ENCODE measurements at regions of chr14 and their contacts with region 1.

Region 1: GRCh38 chr14:99604283-99604765 is 317 bp upstream of the CCDC85C start:
- DNase-seq: peak; percentile 96 to 97
- ATAC-seq: peak; percentile 93 to 98 (median 94)
- H3K4me3 ChIP-seq: peak overlapping the region; percentile 92
- H3K4me3 Mint-ChIP-seq: peak overlapping the region; percentile 95
- H3K27ac ChIP-seq: peak overlapping the region; percentile 77
- H3K27ac Mint-ChIP-seq: peak overlapping the region; percentile 79 to 85
- H3K4me1 ChIP-seq: peaks cover 26% of the 10 kb centered on the region
- H3K4me1 Mint-ChIP-seq: peaks cover 13 to 23% of the 10 kb centered on the region in 2 donors
- H3K27me3 ChIP-seq: no peaks in the 10 kb centered on the region
- H3K27me3 Mint-ChIP-seq: no peaks in the 10 kb centered on the region
- CTCF ChIP-seq: no peak

Region 2: DNA sequence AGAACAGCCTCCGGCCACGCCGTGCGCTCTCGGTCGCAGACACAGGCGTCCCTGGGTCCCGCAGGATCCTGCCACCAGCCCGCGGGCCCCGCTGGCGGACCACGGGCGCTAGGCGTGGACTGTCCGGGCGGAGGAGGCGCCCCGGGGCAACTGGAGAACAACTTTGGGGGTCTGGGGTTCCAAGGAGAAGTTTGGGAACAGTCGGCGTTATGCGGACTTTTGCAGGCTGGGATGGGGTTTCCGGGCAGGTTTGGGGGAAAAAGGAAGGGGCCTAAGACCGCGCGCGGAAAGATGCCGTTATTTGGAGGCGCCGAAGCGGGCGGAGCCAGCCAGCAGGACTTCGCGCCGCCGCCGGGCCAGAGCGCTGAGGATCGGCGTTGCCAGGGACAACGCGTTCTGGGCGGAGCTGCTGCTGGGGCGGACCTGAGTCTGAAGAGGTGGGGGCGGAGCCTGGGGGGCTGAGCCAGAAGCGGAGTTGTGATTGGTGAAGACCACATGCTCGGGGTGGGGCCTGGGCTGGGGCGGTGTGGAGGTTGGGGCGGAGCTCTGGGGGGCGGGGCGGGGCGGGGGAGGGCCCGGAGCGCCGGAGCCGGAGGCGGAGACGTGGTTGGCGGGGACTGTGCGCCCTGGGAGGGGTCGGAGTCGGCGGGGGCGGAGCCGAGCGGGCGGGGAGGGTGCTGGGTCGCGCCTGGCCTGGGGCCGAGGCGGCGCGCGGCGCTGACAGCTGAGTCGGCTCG is 79.5 kb after region 1 on chr14 and contains the start of gene CYP46A1:
- intact Hi-C with region 1: loop called (anchors 5 kb)
- DNase-seq: peak; percentile 99 to 100
- ATAC-seq: peak; percentile 93 to 99 (median 93)
- H3K4me3 ChIP-seq: peak within 1 kb of the TSS; percentile 91
- H3K4me3 Mint-ChIP-seq: peak within 1 kb of the TSS; percentile 93
- H3K27ac ChIP-seq: peak within 1 kb of the TSS; percentile 85
- H3K27ac Mint-ChIP-seq: peak within 1 kb of the TSS; percentile 82 to 91
- H3K4me1 ChIP-seq: peaks cover 16% of the 10 kb centered on the region
- H3K4me1 Mint-ChIP-seq: peaks cover 7 to 27% of the 10 kb centered on the region in 2 donors
- H3K27me3 ChIP-seq: peaks cover 7% of the 10 kb centered on the region
- H3K27me3 Mint-ChIP-seq: peaks cover 29 to 32% of the 10 kb centered on the region in 2 donors
- CTCF ChIP-seq: no peak
- total RNA-seq, gene CYP46A1: 0.09 to 0.45 (median 0.09) TPM

Measured in natural killer cell (primary cell).